GM10248 (cell line): ENCODE measurements at regions of chr6 and their contacts with region 1.

Region 1: GRCh38 chr6:105087571-105088211 is 92.1 kb downstream of the POPDC3 start:
- DNase-seq: peak; percentile 48
- CTCF ChIP-seq: peak; percentile 46

Region 2: GRCh38 chr6:104928141-104928540 is 159.6 kb before region 1 on chr6:
- CTCF ChIA-PET with region 1: no interaction called
- POLR2A ChIA-PET with region 1: no interaction called
- DNase-seq: no peak
- CTCF ChIP-seq: no peak

Region 3: DNA sequence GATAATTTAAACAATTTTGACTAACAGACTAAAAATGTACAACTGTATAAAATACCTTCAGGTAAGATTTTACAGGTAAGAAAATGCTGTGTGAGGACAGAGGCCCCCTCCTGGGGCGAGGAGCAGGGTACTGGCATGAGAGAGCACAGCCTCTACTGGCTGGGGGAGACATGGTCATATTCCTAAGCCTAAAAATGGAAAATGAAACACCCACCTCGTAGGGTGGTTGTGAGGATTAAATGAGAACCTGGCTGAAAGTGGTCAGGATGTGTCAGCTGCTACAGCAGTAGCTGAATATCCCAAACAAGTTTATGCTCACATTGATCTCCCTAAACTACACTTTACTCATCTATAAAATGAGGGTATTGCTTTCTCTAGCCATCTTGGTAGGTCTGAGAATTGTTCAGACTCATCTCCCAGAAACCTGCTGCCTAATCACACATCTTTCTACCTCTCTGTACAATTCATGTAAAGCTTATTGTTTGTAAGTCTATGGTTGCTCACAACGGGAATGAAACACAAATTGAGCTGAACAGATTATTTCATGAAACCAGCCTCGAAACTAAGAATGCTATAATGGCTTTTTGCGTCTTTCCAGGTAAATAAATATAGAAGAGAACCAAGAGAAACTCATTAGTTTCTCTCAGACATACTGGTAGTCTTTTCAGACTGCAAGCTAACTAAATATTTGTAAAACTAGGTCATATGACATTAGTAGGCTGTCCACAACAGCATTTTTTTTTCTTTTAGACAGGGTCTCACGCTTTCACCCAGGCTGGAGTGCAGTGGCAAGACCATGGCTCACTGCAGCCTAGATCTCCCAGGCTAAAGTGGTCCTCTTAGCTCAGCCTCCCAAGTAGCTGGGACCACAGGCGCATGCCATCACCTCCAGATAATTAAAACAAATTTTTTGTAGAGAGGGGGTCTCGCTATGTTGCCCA is 22.5 kb after region 1 on chr6:
- CTCF ChIA-PET with region 1: interaction called, 16 read pairs
- POLR2A ChIA-PET with region 1: no interaction called
- DNase-seq: no peak
- CTCF ChIP-seq: no peak

Region 4: DNA sequence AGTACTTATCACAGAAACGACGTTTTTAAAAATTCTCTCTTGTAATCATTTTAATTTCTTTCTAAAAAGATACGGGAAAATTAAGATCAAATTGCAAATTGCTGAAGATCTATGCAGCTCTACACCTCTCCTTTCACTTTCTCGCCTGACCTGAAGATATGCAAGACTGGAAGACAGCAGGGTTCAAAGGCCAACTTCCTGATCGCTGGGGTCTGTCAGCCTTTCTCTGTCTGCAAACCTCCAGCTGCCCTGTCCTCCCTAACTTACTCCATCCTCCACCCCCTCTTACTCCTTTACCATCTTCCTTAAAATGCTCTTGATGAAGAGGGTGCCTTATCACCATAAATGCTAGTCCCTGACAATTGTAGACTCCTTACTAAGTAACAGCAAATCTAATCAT is 28.5 kb after region 1 on chr6:
- CTCF ChIA-PET with region 1: interaction called, 16 read pairs
- POLR2A ChIA-PET with region 1: no interaction called
- DNase-seq: no peak
- CTCF ChIP-seq: no peak

Region 5: DNA sequence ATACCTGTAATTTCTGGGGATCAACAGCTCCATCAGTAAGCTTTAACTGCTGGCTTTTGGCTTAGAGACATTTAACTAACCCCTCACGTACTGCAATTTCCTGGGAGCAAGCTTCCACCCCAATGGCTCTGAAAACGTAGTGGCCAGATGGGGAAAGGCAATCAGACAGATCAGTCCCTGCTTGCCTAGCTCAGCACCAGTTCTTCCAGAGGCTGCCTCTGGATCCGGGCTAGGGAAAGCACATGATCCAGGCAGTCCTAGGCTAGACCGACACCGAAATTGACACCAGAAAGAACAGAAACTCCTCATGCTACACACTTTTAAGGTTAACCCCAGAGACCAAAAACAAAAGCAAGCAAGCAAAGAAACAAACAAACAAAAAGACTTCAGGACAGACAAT is 301.9 kb after region 1 on chr6:
- CTCF ChIA-PET with region 1: interaction called, 11 read pairs
- POLR2A ChIA-PET with region 1: no interaction called
- DNase-seq: no peak
- CTCF ChIP-seq: no peak

Region 6: DNA sequence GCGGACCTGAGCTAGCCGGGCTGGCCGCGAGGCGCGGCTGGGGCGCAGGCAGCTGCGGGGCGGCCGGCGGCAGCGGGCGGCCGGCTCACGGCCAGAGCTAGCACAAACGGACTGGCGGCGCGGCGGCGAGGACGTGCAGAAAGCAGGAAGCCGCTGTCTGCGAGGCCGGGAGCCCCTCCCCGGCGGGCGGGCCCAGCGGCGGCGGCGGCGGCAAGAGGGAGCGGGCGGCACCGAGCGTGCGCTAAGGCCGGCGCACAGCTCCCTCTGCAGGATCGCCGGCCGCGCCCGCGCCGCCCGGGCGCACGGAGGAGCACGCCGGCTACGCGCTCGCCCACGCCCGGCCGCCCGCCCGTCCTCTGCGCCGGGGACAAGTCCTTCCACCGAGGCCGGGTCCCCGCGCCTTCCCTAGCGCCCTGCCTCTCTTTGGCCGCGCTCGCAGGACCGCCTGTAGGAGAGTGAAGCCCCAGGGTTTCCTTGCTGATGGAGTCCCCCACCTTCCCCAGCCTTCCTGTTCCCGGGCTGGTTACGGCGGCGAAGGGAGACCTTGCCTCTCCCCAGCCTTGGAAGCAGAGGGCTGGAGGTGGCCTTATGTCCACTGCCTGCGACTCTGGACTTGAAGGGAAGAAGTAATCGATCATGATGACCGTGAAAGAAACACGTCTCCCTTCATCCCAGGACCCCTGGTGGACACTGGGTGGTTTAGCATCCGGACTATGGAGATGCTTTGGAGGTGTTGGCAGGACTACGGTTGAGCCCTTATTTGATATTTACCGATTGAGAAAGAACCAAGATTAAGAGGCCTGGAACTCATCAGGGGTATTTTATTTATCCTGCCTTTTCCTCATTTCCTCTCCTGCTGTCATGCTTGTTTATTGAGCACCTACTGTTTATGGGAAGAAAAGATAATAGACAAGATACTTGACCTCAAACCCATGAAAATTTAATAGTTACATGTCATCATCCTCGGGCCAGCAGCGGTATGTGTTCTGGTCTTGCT is 315.5 kb after region 1 on chr6 and contains the start of gene PREP:
- CTCF ChIA-PET with region 1: interaction called, 34 read pairs
- POLR2A ChIA-PET with region 1: interaction called, 3 read pairs
- DNase-seq: peak; percentile 93
- CTCF ChIP-seq: peak; percentile 71

Region 7: GRCh38 chr6:105424175-105424783 is 336.6 kb after region 1 on chr6:
- CTCF ChIA-PET with region 1: interaction called, 63 read pairs
- POLR2A ChIA-PET with region 1: no interaction called
- DNase-seq: peak; percentile 58
- CTCF ChIP-seq: peak; percentile 79